ENCODE measurements at regions of chr6 and their contacts with region 1.

Region 1: GRCh38 chr6:90478789-90479602 is 107.9 kb downstream of the MAP3K7 start:
- DNase-seq: peak; percentile 78 to 92 (median 82)
- H3K4me3 ChIP-seq: no peak overlapping the region
- H3K4me3 Mint-ChIP-seq: peak overlapping the region in 5 of 8 donors; percentile 29 to 78 (median 69)
- H3K27ac ChIP-seq: no peak overlapping the region
- H3K27ac Mint-ChIP-seq: peak overlapping the region; percentile 54 to 91 (median 88)
- H3K4me1 ChIP-seq: peaks cover 23% of the 10 kb centered on the region
- H3K4me1 Mint-ChIP-seq: peaks cover 12 to 41% (median 22%) of the 10 kb centered on the region in 4 donors
- H3K27me3 ChIP-seq: no peaks in the 10 kb centered on the region
- H3K27me3 Mint-ChIP-seq: no peaks in the 10 kb centered on the region

Region 2: GRCh38 chr6:89432875-89433251 is 1046.1 kb before region 1 on chr6 and contains the start of gene ANKRD6:
- CTCF ChIA-PET with region 1: no interaction called
- POLR2A ChIA-PET with region 1: no interaction called
- intact Hi-C with region 1: loop called (anchors 1 kb)
- DNase-seq: peak; percentile 68 to 86 (median 80)
- H3K4me3 ChIP-seq: peak within 1 kb of the TSS; percentile 39 to 44
- H3K4me3 Mint-ChIP-seq: peak within 1 kb of the TSS; percentile 88 to 93 (median 90)
- H3K27ac ChIP-seq: peak within 1 kb of the TSS; percentile 37
- H3K27ac Mint-ChIP-seq: peak within 1 kb of the TSS; percentile 47 to 90 (median 86)
- H3K4me1 ChIP-seq: peaks cover 10% of the 10 kb centered on the region
- H3K4me1 Mint-ChIP-seq: peaks cover 16 to 34% (median 24%) of the 10 kb centered on the region in 4 donors
- H3K27me3 ChIP-seq: no peaks in the 10 kb centered on the region
- H3K27me3 Mint-ChIP-seq: peaks cover 3 to 4% of the 10 kb centered on the region in 2 donors
- total RNA-seq, gene ANKRD6: 4.4 to 5.8 TPM

Region 3: DNA sequence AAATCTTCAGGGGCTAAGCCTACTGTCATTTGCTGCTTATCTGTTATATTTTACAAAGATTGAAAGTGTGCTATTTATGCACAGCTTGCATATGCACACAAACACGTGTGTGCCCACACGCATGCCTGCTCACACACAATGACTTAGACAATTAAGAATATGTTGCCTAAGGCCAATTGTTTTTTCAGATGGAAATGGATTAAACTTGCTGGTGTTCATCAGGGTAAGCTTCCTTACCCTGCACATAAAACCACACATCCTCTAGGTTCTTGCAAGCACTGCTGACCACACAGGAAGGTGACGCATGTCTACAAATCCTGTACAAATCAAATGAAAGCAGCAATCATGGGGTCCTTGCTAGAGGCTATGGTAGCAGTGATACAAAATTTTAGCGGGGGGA is 526.3 kb before region 1 on chr6:
- CTCF ChIA-PET with region 1: interaction called, 16 read pairs
- POLR2A ChIA-PET with region 1: interaction called, 6 read pairs
- intact Hi-C with region 1: no loop called
- DNase-seq: peak; percentile 80 to 90 (median 83)
- H3K4me3 ChIP-seq: no peak overlapping the region
- H3K4me3 Mint-ChIP-seq: peak overlapping the region in 7 of 8 donors; percentile 37 to 83 (median 68)
- H3K27ac ChIP-seq: peak overlapping the region; percentile 7
- H3K27ac Mint-ChIP-seq: peak overlapping the region; percentile 84 to 92 (median 89)
- H3K4me1 ChIP-seq: peaks cover 53% of the 10 kb centered on the region
- H3K4me1 Mint-ChIP-seq: peaks cover 46 to 71% (median 59%) of the 10 kb centered on the region in 4 donors
- H3K27me3 ChIP-seq: no peaks in the 10 kb centered on the region
- H3K27me3 Mint-ChIP-seq: no peaks in the 10 kb centered on the region

Region 4: GRCh38 chr6:90107771-90108282 is 371.2 kb before region 1 on chr6:
- CTCF ChIA-PET with region 1: no interaction called
- POLR2A ChIA-PET with region 1: interaction called, 4 read pairs
- intact Hi-C with region 1: loop called (anchors 1 kb)
- DNase-seq: peak in 1 of 5 donors; percentile 21
- H3K4me3 ChIP-seq: no peak overlapping the region
- H3K4me3 Mint-ChIP-seq: peak overlapping the region in 5 of 8 donors; percentile 35 to 74 (median 60)
- H3K27ac ChIP-seq: no peak overlapping the region
- H3K27ac Mint-ChIP-seq: peak overlapping the region in 4 of 7 donors; percentile 15 to 67 (median 22)
- H3K4me1 ChIP-seq: peaks cover 78% of the 10 kb centered on the region
- H3K4me1 Mint-ChIP-seq: peaks cover 57 to 96% (median 73%) of the 10 kb centered on the region in 4 donors
- H3K27me3 ChIP-seq: no peaks in the 10 kb centered on the region
- H3K27me3 Mint-ChIP-seq: no peaks in the 10 kb centered on the region

Region 5: GRCh38 chr6:90274451-90275030 is 204.5 kb before region 1 on chr6:
- CTCF ChIA-PET with region 1: interaction called, 8 read pairs
- POLR2A ChIA-PET with region 1: interaction called, 4 read pairs
- intact Hi-C with region 1: loop called (anchors 1 kb)
- DNase-seq: peak; percentile 93 to 99 (median 97)
- H3K4me3 ChIP-seq: peak overlapping the region in 1 of 2 donors; percentile 21
- H3K4me3 Mint-ChIP-seq: peak overlapping the region; percentile 60 to 89 (median 79)
- H3K27ac ChIP-seq: peak overlapping the region; percentile 82
- H3K27ac Mint-ChIP-seq: peak overlapping the region; percentile 94 to 100 (median 99)
- H3K4me1 ChIP-seq: peaks cover 50% of the 10 kb centered on the region
- H3K4me1 Mint-ChIP-seq: peaks cover 51 to 80% (median 67%) of the 10 kb centered on the region in 4 donors
- H3K27me3 ChIP-seq: no peaks in the 10 kb centered on the region
- H3K27me3 Mint-ChIP-seq: no peaks in the 10 kb centered on the region

Region 6: GRCh38 chr6:90319044-90319443 is 160.0 kb before region 1 on chr6:
- CTCF ChIA-PET with region 1: no interaction called
- POLR2A ChIA-PET with region 1: no interaction called
- intact Hi-C with region 1: no loop called
- DNase-seq: no peak
- H3K4me3 ChIP-seq: no peak overlapping the region
- H3K4me3 Mint-ChIP-seq: no peak overlapping the region
- H3K27ac ChIP-seq: no peak overlapping the region
- H3K27ac Mint-ChIP-seq: no peak overlapping the region
- H3K4me1 ChIP-seq: peaks cover 4% of the 10 kb centered on the region
- H3K4me1 Mint-ChIP-seq: peaks cover 0 to 8% (median 6%) of the 10 kb centered on the region in 4 donors
- H3K27me3 ChIP-seq: no peaks in the 10 kb centered on the region
- H3K27me3 Mint-ChIP-seq: peaks cover 3 to 10% of the 10 kb centered on the region in 2 donors

Region 7: GRCh38 chr6:90393232-90393884 is 85.6 kb before region 1 on chr6:
- CTCF ChIA-PET with region 1: interaction called, 162 read pairs
- POLR2A ChIA-PET with region 1: interaction called, 11 read pairs
- intact Hi-C with region 1: loop called (anchors 1 kb)
- DNase-seq: peak; percentile 73 to 75 (median 73)
- H3K4me3 ChIP-seq: no peak overlapping the region
- H3K4me3 Mint-ChIP-seq: peak overlapping the region in 2 of 8 donors; percentile 23 to 24
- H3K27ac ChIP-seq: no peak overlapping the region
- H3K27ac Mint-ChIP-seq: peak overlapping the region in 4 of 7 donors; percentile 5 to 72 (median 38)
- H3K4me1 ChIP-seq: peaks cover 30% of the 10 kb centered on the region
- H3K4me1 Mint-ChIP-seq: peaks cover 22 to 40% (median 27%) of the 10 kb centered on the region in 4 donors
- H3K27me3 ChIP-seq: no peaks in the 10 kb centered on the region
- H3K27me3 Mint-ChIP-seq: no peaks in the 10 kb centered on the region

Region 8: DNA sequence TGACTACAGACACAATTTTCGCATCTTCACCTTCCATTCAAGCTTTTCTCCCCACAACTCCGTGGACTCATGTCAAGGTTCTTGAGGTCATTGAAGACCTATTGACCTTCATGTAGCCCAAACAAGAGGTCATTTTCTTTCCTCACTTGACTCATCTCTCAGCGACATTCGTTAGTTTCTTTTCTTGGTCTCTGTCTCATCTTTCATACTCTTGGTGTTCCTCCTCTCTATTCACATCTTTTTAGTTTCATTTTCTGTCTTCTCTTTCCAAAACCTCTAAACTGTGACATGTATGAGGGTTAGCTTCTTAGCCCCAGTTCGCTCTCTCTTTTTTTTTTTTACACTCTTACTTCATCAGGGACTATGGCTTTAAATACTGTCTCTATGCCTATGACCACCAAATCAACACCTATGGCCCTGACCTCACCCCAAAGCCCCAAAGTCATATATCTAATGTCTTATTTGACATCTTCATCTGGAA is 53.8 kb before region 1 on chr6:
- CTCF ChIA-PET with region 1: interaction called, 55 read pairs
- POLR2A ChIA-PET with region 1: interaction called, 6 read pairs
- intact Hi-C with region 1: no loop called
- DNase-seq: peak; percentile 29 to 58 (median 49)
- H3K4me3 ChIP-seq: peak overlapping the region in 1 of 2 donors; percentile 36
- H3K4me3 Mint-ChIP-seq: peak overlapping the region; percentile 63 to 88 (median 82)
- H3K27ac ChIP-seq: peak overlapping the region; percentile 50
- H3K27ac Mint-ChIP-seq: peak overlapping the region; percentile 58 to 95 (median 91)
- H3K4me1 ChIP-seq: peaks cover 20% of the 10 kb centered on the region
- H3K4me1 Mint-ChIP-seq: peaks cover 13 to 19% (median 16%) of the 10 kb centered on the region in 4 donors
- H3K27me3 ChIP-seq: no peaks in the 10 kb centered on the region
- H3K27me3 Mint-ChIP-seq: no peaks in the 10 kb centered on the region

Region 9: DNA sequence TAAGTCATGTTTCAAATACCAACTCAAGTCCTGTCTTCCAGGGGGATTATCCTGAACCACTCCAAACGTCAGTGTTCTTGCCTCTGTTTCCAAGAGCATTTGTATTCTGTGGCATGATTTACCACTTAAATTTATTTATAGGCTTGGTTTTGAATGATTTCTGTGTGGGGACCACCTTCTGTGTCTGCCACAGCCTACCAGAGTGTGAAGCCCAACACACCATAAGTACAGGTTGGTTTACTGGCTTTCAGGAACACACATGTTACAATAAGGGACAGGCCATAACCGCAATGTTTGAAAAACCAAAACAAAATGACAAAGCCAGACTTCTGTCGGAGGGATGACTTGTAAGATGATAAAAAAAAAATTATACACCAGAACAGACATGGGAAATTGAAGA is 164.4 kb after region 1 on chr6:
- CTCF ChIA-PET with region 1: no interaction called
- POLR2A ChIA-PET with region 1: no interaction called
- intact Hi-C with region 1: no loop called
- DNase-seq: no peak
- H3K4me3 ChIP-seq: no peak overlapping the region
- H3K4me3 Mint-ChIP-seq: no peak overlapping the region
- H3K27ac ChIP-seq: no peak overlapping the region
- H3K27ac Mint-ChIP-seq: no peak overlapping the region
- H3K4me1 ChIP-seq: no peaks in the 10 kb centered on the region
- H3K4me1 Mint-ChIP-seq: no peaks in the 10 kb centered on the region
- H3K27me3 ChIP-seq: no peaks in the 10 kb centered on the region
- H3K27me3 Mint-ChIP-seq: peaks cover 15 to 31% of the 10 kb centered on the region in 2 donors